PC-9 (cell line): ENCODE measurements at regions of chr1 and their contacts with region 1.

Region 1: GRCh38 chr1:185745165-185745564 is 11.0 kb downstream of the HMCN1 start:
- DNase-seq: no peak
- H3K4me3 ChIP-seq: no peak overlapping the region
- H3K27ac ChIP-seq: no peak overlapping the region
- H3K4me1 ChIP-seq: no peaks in the 10 kb centered on the region
- H3K27me3 ChIP-seq: no peaks in the 10 kb centered on the region
- CTCF ChIP-seq: no peak

Region 2: DNA sequence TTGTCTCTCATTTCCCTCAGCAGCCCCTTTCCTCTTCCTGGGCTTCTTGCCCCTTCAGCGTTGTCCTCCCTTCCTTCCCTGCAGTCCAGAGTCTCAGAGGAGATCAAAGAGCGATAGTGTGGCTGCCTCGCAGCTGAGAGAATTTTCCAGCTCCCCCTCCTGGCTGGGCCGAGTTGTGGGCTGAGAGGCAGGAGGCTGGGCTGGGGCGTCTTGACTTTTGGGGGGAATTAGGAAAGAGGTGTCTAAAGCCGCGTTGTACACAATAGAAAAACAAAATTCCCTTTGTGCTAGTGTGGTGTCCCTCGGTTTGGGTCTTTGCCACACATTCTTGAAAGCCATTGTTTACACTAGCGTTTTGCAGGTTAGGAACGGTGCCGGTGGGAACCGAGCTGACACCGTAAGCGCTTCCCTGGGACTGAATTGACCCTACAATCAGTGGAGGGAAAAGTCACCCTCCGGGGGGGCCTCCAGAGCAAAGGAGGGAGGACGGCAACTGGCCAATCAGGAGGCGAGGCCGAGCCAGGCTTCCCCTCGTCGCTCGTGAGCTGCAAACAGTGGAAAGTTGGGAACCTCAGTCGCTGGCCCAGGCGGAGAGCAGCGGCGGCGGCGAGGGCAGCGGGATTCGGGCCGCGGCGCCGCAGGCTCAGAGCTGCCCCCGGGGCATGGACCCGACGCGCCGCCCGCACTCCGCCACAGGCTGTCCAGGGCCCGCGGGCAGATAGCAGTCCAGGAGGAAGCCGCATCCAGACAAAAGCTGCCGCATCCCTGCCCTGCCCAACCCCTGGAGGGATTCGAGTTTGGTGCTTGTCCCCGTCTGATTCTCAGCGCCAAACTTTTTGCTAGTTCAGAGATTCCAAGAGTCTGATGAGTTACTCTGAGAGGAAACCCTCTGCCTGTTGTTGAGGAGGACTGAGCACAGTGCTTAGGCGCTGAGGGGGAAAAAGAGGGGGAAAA is 11.1 kb before region 1 on chr1 and contains the start of gene HMCN1:
- CTCF ChIA-PET with region 1: no interaction called
- POLR2A ChIA-PET with region 1: no interaction called
- intact Hi-C with region 1: loop called (anchors 1 kb)
- DNase-seq: peak in 1 of 2 experiments; percentile 39
- H3K4me3 ChIP-seq: peak within 1 kb of the TSS; percentile 79
- H3K27ac ChIP-seq: no peak within 1 kb of the TSS
- H3K4me1 ChIP-seq: peaks cover 14% of the 10 kb centered on the region
- H3K27me3 ChIP-seq: no peaks in the 10 kb centered on the region
- CTCF ChIP-seq: no peak; the same call in 1 of the 2 replicates
- total RNA-seq, gene HMCN1: 0.31 and 0.83 TPM in 2 replicates

Region 3: GRCh38 chr1:185864889-185865288 is 119.7 kb after region 1 on chr1:
- CTCF ChIA-PET with region 1: interaction called, 14 read pairs
- POLR2A ChIA-PET with region 1: no interaction called
- intact Hi-C with region 1: no loop called
- DNase-seq: no peak
- H3K4me3 ChIP-seq: no peak overlapping the region
- H3K27ac ChIP-seq: no peak overlapping the region
- H3K4me1 ChIP-seq: peaks cover 7% of the 10 kb centered on the region; the same call in 1 of the 2 replicates
- H3K27me3 ChIP-seq: no peaks in the 10 kb centered on the region
- CTCF ChIP-seq: no peak